Activated T-helper 1 cell treated with anti-CD3 and anti-CD28 coated beads, Interleukin-12 subunit alpha, Interleukin-12 subunit beta, Interleukin-2, Interleukin-4 antibody, amounts not matched to agents 30 ng/mL and 10 ng/mL and 1 ng/mL, durations not matched to agents 14 hours and 24 hours and 36 hours (primary cell): ENCODE measurements at regions of chr16 and their contacts with region 1.

Region 1: DNA sequence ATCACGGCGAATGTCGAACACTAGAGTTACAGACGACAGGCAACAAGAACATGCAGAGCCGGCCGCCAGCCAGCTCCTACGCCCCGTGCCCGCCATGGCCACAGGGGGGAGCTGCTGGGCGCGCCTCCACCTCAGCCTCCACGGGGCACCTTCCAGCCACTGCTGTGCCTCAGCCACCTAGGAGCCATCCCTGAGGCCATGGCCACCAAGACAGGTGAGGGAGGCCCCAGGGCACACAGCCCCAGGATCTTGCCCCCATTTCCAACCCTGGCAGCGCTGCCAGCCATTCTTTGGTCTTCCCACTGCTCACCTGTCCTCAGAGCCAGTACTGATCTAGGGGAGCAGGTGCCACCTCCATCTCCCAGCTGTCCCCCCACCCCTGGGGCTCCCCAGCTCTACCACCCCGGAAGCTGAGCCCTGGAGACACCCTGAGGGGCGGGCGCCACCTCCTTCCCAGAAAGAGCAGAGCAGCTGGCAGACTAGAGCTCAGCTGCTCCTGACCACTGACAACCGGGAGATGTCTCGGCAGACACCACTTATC is 11.8 kb downstream of the GNPTG start:
- DNase-seq: peak; percentile 53
- H3K4me3 Mint-ChIP-seq: no peak overlapping the region
- H3K27ac Mint-ChIP-seq: no peak overlapping the region
- H3K4me1 Mint-ChIP-seq: no peaks in the 10 kb centered on the region
- H3K27me3 Mint-ChIP-seq: no peaks in the 10 kb centered on the region

Region 2: GRCh38 chr16:1408171-1408837 is 44.7 kb after region 1 on chr16:
- intact Hi-C with region 1: loop called (anchors 2 kb)
- DNase-seq: peak; percentile 92
- H3K4me3 Mint-ChIP-seq: peak overlapping the region; percentile 75
- H3K27ac Mint-ChIP-seq: peak overlapping the region; percentile 18
- H3K4me1 Mint-ChIP-seq: peaks cover 5% of the 10 kb centered on the region
- H3K27me3 Mint-ChIP-seq: no peaks in the 10 kb centered on the region

Region 3: GRCh38 chr16:1413684-1414531 is 50.3 kb after region 1 on chr16:
- intact Hi-C with region 1: loop called (anchors 1 kb)
- DNase-seq: peak; percentile 58
- H3K4me3 Mint-ChIP-seq: peak overlapping the region; percentile 83
- H3K27ac Mint-ChIP-seq: peak overlapping the region; percentile 75
- H3K4me1 Mint-ChIP-seq: no peaks in the 10 kb centered on the region
- H3K27me3 Mint-ChIP-seq: no peaks in the 10 kb centered on the region

Region 4: DNA sequence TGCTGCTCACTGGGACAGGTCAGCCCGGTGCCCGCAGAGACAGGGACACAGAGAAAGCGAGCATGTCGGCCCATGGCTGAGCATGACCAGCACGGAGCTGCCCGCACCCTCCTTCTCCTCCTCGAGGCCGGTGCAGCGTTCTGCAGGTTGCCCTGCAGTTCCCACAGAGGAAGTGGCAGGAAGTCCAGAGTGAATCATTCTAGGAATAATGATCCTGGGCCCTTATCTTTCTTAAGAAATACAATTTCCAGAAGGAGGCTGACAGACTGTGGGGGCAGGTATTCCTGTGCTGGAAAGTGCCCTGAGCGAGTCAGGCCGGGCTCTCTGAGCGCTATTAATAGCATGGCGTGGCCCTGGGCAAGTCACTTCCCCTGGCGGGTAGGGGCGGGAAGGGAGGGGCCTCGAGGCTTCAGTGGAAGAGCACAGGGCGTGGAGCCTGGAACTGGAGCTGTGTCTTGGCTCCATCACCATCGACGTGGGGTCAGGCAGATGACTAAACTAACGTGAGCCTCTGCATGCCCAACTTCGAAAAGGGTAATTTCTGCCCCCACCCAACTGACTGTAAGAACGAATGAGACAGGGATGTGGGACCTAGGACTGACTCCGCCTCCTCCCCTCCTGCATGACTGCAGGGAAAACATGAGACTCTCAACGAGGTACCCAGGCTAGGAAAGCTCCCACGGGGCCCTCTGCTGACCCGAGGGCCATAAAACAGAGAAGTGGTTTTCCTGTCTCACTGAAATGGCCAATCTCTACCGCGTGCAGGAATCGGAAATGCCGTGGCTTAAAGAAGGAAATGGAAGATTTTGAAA is 179.7 kb after region 1 on chr16:
- intact Hi-C with region 1: loop called (anchors 5 kb)
- DNase-seq: peak; percentile 38
- H3K4me3 Mint-ChIP-seq: peak overlapping the region; percentile 70
- H3K27ac Mint-ChIP-seq: peak overlapping the region; percentile 91
- H3K4me1 Mint-ChIP-seq: peaks cover 34% of the 10 kb centered on the region
- H3K27me3 Mint-ChIP-seq: no peaks in the 10 kb centered on the region